Activated CD4-positive, alpha-beta memory T cell treated with anti-CD3 and anti-CD28 coated beads for 36 hours (primary cell): ENCODE measurements at regions of chr9 and their contacts with region 1.

Region 1: DNA sequence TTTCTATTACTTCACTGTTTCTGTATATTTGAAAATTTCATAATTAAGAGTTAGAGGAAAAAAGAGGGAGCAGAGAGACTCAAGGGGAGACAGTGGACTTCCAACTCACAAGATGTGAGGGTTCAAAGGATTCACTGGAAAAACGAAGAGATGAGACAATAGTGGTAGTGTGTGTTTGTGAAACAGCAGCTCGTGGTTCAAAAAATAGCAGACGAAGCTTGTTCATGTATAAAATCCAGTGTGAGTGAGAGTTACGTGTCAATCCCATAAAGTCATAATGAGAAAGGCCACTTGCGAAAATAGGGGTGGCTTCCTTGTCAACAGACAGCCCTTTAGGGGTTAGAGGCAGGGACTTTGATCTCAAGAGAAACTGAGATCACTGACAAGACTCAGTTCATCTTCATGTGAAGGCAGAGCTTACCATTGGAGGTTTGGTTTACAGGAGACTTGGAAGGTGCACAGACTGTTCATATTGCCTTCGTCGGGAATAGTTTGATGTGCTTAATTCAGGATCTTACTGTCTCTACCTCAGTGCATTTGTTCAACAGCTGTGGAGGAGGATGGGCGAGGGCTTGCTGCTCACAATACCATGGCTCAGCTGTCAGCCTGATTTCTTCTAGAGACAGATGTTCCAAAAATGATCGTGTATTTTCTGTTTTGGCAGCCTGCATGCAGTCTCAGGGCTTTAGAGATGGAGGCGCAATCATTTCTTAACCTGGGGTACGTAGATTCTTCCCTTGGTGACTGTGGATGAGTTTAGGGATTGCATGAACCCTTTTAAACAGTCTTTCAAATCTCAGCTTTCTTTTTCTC is 105.7 kb upstream of the KLF9 start:
- DNase-seq: peak; percentile 31
- H3K4me3 Mint-ChIP-seq: peak overlapping the region; percentile 58
- H3K27ac Mint-ChIP-seq: peak overlapping the region; percentile 88
- H3K4me1 Mint-ChIP-seq: peaks cover 30% of the 10 kb centered on the region
- H3K27me3 Mint-ChIP-seq: peaks cover 1% of the 10 kb centered on the region

Region 2: DNA sequence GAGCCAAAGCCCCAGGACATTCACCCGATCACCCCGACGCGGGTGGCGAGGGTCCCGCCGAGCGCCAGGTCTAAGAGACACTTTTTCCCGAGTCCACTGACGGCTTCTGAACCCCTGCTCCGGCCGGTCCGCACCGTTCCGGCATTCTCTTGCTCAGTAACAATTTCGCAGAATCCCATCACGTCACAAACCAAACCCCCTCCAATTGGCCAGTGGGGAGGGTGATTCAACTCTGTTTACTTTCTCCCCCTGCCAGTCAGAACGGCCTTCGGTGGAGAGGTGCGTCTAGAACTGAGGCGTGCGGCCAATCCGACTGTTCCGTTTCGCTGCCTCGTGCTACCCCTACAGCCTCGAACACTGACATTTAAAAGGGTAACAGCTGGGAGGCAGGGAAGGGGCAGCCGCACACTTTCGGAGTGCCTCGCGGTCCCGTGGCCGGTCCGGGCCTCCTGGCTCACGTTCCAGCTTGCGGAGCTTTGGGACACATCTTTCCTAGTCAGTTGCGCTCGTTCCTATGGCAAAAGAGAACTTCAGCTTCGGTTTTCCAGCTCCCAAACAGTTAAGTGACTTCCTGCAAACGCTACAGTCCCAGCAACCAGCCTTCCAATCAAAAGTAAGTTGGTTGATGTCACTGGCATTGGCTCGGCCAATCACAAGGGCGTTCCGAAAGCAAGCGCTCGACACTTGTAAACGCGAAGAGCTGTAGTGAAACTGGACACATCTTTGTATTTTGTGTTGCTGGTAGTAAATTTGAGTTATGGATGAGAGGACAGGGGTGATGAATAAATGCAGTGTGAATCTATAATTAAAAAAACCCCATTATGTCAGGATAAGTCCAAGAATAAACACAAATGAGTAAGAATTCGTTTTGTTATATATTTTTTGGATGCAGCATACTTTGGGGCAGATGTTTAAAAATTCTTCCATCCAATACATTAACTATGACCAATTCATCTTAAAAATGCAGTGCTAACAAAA is 106.0 kb before region 1 on chr9 and contains the start of gene KLF9:
- CTCF ChIA-PET with region 1: interaction called, 3 read pairs
- POLR2A ChIA-PET with region 1: interaction called, 5 read pairs
- intact Hi-C with region 1: loop called (anchors 1 kb)
- DNase-seq: peak; percentile 96
- H3K4me3 Mint-ChIP-seq: peak within 1 kb of the TSS; percentile 97
- H3K27ac Mint-ChIP-seq: peak within 1 kb of the TSS; percentile 100
- H3K4me1 Mint-ChIP-seq: peaks cover 37% of the 10 kb centered on the region
- H3K27me3 Mint-ChIP-seq: peaks cover 2% of the 10 kb centered on the region
- total RNA-seq, gene KLF9: 23.7 to 24.5 TPM